ENCODE measurements at regions of chr15 and their contacts with region 1.

Region 1: DNA sequence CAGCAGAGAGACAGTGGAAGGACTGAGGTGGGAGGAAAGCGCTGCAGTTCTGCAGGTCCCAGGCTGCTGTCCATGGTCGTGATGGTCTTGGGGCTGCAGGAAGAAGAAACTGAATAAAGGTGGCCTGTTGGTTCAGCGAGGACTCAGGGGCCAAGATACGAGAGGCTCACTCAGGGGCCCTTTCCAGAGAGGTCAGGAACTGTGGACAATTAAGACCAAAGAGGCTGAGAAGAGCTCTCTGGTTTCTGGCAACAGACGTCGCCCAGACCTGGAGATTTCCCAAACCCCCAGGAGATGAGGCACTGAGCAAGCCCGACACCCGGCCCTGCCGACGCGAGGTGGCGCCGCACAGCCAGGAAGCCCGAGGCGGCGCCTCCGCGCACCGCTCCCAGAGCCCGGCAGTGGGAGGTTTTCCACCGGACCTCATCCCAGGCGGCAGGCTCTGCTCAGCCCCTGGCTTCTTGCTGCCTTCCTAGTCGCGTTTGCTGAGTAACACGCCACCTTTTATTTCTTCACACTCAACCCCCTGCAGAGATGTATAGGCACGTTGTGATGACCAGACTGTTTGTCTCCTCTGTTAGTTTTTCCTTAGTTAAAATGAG is 56.4 kb upstream of the ARRDC4 start:
- DNase-seq: peak in 3 of 9 donors; percentile 2 to 41 (median 7)
- ATAC-seq: peak; percentile 40
- H3K4me3 ChIP-seq: no peak overlapping the region
- H3K4me3 Mint-ChIP-seq: no peak overlapping the region
- H3K27ac ChIP-seq: no peak overlapping the region
- H3K27ac Mint-ChIP-seq: no peak overlapping the region
- H3K4me1 ChIP-seq: no peaks in the 10 kb centered on the region
- H3K4me1 Mint-ChIP-seq: peaks cover 0 to 5% (median 3%) of the 10 kb centered on the region in 7 donors
- H3K27me3 ChIP-seq: no peaks in the 10 kb centered on the region
- H3K27me3 Mint-ChIP-seq: peaks cover 26 to 55% (median 42%) of the 10 kb centered on the region in 5 donors

Region 2: DNA sequence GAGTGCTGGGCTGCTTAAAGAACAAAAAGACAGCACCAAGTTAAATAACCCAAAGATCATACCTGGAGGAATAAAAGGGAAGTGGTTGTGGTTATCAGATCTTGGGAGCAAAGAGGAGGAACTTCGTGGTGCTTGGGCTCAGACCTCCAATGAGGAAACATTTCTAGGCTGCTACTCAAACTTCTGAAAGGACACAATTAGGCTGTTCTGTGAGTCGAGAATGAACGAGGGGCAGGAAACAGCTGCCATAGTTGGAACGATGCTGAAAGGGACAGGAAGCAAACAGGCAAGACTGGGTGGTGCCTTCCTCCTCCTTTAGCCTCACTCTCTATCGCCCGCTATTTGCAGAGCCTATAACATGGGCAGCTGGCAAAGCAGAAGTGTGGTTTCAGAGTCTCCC is 219.8 kb before region 1 on chr15:
- CTCF ChIA-PET with region 1: no interaction called
- POLR2A ChIA-PET with region 1: no interaction called
- intact Hi-C with region 1: no loop called
- DNase-seq: no peak
- ATAC-seq: no peak
- H3K4me3 ChIP-seq: no peak overlapping the region
- H3K4me3 Mint-ChIP-seq: no peak overlapping the region
- H3K27ac ChIP-seq: no peak overlapping the region
- H3K27ac Mint-ChIP-seq: no peak overlapping the region
- H3K4me1 ChIP-seq: no peaks in the 10 kb centered on the region
- H3K4me1 Mint-ChIP-seq: peaks cover 0 to 5% (median 0%) of the 10 kb centered on the region in 7 donors
- H3K27me3 ChIP-seq: no peaks in the 10 kb centered on the region
- H3K27me3 Mint-ChIP-seq: peaks cover 0 to 22% (median 8%) of the 10 kb centered on the region in 5 donors

Region 3: DNA sequence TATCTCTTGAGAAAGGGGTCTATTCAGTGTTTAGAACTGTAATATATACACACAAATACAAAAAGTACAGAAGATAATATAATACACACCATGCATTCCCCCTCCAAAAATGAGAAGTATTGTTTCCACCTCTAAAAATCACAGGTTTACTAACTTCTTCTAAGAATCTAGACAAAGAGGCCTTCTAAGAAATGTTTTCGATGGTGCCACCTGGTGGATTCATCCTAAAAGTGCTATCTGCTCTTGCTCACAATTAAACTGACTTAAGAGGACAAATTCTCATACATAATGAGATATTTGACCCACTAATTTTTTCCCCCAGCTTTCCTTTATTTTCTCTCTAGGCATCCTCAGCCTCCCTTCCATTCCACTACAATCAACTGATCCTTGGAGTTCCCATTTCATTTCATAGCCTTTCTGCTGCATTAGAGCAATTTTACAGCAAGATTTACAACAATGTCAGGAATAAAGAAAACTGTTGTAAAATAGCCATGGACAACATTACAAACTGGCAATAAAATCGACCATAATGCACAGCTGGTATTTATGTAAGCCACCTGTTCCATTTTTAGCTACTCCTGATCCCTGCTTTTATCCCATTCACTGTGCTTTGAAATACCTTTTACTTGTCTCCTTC is 181.0 kb after region 1 on chr15:
- CTCF ChIA-PET with region 1: interaction called, 5 read pairs
- POLR2A ChIA-PET with region 1: no interaction called
- intact Hi-C with region 1: loop called (anchors 1 kb)
- DNase-seq: peak in 7 of 9 donors; percentile 3 to 51 (median 36)
- ATAC-seq: no peak
- H3K4me3 ChIP-seq: no peak overlapping the region
- H3K4me3 Mint-ChIP-seq: no peak overlapping the region
- H3K27ac ChIP-seq: no peak overlapping the region
- H3K27ac Mint-ChIP-seq: no peak overlapping the region
- H3K4me1 ChIP-seq: no peaks in the 10 kb centered on the region
- H3K4me1 Mint-ChIP-seq: no peaks in the 10 kb centered on the region
- H3K27me3 ChIP-seq: no peaks in the 10 kb centered on the region
- H3K27me3 Mint-ChIP-seq: no peaks in the 10 kb centered on the region

Region 4: DNA sequence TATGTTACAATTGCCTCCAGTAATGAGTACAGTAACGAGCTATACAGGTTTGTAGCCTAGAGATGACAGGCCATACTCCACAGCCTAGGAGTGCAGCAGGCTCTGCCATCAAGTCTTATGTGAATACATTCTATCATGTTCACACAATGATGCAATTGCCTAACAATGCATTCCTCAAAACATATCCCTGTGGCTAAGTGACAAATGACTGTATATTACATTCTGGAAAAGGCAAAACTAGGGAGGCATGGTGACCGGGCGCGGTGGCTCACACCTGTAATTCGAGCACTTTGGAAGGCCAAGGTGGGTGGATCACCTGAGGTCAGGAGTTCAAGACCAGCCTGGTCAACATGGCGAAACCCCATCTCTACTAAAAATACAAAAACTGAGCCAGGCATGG is 551.9 kb after region 1 on chr15:
- CTCF ChIA-PET with region 1: no interaction called
- POLR2A ChIA-PET with region 1: no interaction called
- intact Hi-C with region 1: no loop called
- DNase-seq: no peak
- ATAC-seq: no peak
- H3K4me3 ChIP-seq: no peak overlapping the region
- H3K4me3 Mint-ChIP-seq: no peak overlapping the region
- H3K27ac ChIP-seq: no peak overlapping the region
- H3K27ac Mint-ChIP-seq: no peak overlapping the region
- H3K4me1 ChIP-seq: no peaks in the 10 kb centered on the region
- H3K4me1 Mint-ChIP-seq: no peaks in the 10 kb centered on the region
- H3K27me3 ChIP-seq: no peaks in the 10 kb centered on the region
- H3K27me3 Mint-ChIP-seq: peaks cover 21 to 39% (median 31%) of the 10 kb centered on the region in 5 donors

Measured in naive thymus-derived CD4-positive, alpha-beta T cell (primary cell).